ENCODE measurements at regions of chr17 and their contacts with region 1.

Region 1: DNA sequence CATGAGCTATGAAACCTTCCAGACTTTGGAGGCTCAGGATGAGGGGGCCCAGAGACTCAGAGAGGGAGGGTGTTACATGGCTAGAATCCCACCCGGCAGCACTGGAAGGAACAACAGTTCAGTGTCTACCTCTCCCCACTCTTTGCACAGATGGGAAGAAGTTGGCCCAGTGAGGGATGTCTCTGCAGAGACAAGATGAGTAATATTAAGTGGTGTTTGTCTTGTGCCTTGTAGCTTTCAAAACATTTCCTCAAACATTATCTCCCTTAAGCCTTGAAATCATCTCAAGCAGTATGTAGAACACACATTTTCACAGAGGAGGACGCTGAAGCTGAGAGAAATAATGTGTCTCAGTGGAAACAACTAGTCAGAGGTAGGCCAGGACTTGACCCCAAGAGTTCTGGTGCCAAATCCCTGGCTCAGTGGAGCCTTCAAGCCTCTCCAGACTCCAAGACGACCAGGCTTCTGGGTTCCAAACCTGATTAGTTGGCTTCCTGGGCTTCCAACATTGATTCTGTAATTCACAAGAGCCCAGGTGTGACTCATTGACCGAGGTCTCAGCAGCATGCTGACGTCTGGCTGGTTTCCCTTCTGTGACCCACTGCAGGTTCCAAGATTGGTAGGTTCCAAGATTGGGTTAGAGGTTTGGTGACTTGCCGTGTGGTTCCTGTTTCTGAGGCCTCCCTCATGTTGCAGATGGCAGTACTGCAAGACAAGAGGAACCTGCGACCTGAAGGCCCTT is 7.4 kb downstream of the RNF112 start:
- DNase-seq: no peak
- H3K4me3 ChIP-seq: no peak overlapping the region
- H3K27ac ChIP-seq: peak overlapping the region; percentile 24 to 76
- H3K4me1 ChIP-seq: no peaks in the 10 kb centered on the region
- H3K27me3 ChIP-seq: no peaks in the 10 kb centered on the region
- CTCF ChIP-seq: no peak
- POLR2A ChIP-seq: no peak

Region 2: GRCh38 chr17:19433727-19434340 is 15.4 kb after region 1 on chr17:
- intact Hi-C with region 1: loop called (anchors 2 kb)
- DNase-seq: no peak
- H3K4me3 ChIP-seq: no peak overlapping the region
- H3K27ac ChIP-seq: no peak overlapping the region
- H3K4me1 ChIP-seq: no peaks in the 10 kb centered on the region
- H3K27me3 ChIP-seq: no peaks in the 10 kb centered on the region
- CTCF ChIP-seq: no peak
- POLR2A ChIP-seq: no peak

Region 3: DNA sequence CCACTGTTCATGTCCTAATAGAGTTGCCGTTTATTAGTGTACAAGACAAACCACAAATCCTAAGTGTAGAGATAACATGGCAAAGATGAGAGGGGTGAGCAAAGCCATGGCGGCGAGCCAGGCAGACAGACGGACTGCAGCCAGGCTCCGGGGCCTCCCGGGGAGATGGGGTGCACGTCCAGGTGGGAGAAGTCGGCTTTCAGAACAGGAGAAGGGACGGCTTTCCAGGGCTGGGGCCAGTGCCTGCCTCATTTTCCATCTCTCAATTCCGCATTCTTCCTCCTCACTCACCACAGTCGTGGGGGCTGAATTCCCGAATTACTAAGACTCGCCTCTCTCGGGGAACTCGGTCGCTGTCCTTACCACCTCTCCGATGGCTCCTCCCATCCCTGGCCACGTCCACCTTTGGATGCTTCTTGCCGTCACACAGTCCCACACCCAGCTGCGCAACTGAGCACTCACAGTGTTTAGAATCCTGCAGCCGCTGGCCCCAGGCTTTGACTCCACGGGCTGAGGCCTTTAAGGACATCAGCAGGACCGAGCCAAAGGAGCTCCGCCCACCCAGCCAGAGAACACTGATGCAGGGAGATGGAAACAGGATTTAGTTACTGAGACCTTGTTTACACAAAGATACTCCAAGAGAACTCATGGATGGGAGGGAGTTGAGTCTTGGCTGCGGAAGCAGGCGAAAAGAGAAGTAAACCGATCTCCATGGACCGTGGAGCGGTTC is 52.3 kb after region 1 on chr17:
- intact Hi-C with region 1: no loop called
- DNase-seq: peak in 1 of 2 donors; percentile 49
- H3K4me3 ChIP-seq: peak overlapping the region; percentile 18 to 41 (median 26)
- H3K27ac ChIP-seq: peak overlapping the region in 1 of 2 donors; percentile 84
- H3K4me1 ChIP-seq: no peaks in the 10 kb centered on the region
- H3K27me3 ChIP-seq: no peaks in the 10 kb centered on the region
- CTCF ChIP-seq: no peak
- POLR2A ChIP-seq: no peak

Region 4: GRCh38 chr17:19648475-19649406 is 230.3 kb after region 1 on chr17 and contains the start of gene ALDH3A2:
- intact Hi-C with region 1: no loop called
- DNase-seq: peak; percentile 91 to 96
- H3K4me3 ChIP-seq: peak within 1 kb of the TSS; percentile 65 to 88 (median 68)
- H3K27ac ChIP-seq: peak within 1 kb of the TSS; percentile 91 to 95
- H3K4me1 ChIP-seq: peaks cover 11 to 18% of the 10 kb centered on the region in 2 donors
- H3K27me3 ChIP-seq: no peaks in the 10 kb centered on the region
- CTCF ChIP-seq: peak in 2 of 3 donors; percentile 17 to 31
- POLR2A ChIP-seq: peak; percentile 96
- total RNA-seq, gene ALDH3A2: 123 to 141 (median 137) TPM